ENCODE measurements at regions of chr7 and their contacts with region 1.

Region 1: GRCh38 chr7:55641273-55641691 is 69.0 kb upstream of the VOPP1 start:
- DNase-seq: peak; percentile 62 to 90
- H3K4me3 ChIP-seq: no peak overlapping the region
- H3K27ac ChIP-seq: no peak overlapping the region
- H3K4me1 ChIP-seq: peaks cover 12% of the 10 kb centered on the region
- H3K27me3 ChIP-seq: no peaks in the 10 kb centered on the region
- CTCF ChIP-seq: peak; percentile 100

Region 2: GRCh38 chr7:54773472-54774399 is 867.5 kb before region 1 on chr7:
- CTCF ChIA-PET with region 1: no interaction called
- POLR2A ChIA-PET with region 1: no interaction called
- intact Hi-C with region 1: loop called (anchors 10 kb)
- DNase-seq: peak; percentile 94
- H3K4me3 ChIP-seq: peak overlapping the region; percentile 58
- H3K27ac ChIP-seq: peak overlapping the region; percentile 67
- H3K4me1 ChIP-seq: peaks cover 20% of the 10 kb centered on the region
- H3K27me3 ChIP-seq: no peaks in the 10 kb centered on the region
- CTCF ChIP-seq: peak; percentile 100

Region 3: DNA sequence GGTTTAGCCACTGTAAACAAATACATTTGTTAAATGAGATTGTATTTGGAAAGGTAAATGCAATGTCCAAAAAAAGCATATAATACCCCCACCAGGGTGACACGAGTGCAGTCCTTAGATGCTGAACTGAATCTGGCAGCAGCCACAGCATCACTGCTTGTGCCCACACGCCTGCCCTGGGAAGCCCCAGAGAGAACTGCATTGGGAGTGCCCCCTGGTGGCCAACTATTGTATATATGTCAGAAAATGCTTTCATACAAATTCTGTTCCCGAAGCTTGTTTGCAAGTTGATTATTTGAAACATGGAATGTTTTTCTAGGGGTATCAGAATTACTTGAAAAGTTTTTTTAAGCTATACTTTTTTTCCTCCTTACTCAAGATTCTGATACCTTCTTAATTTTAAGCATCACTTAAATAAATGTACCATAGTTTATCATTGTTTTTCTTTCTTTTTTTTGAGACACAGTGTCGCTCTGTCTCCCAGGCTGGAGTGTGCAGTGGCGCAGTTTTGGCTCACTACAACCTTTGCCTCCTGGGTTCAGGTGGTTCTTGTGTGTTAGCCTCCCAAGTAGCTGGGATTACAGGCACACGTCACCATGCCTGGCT is 226.0 kb before region 1 on chr7:
- CTCF ChIA-PET with region 1: interaction called, 10 read pairs
- POLR2A ChIA-PET with region 1: no interaction called
- intact Hi-C with region 1: no loop called
- DNase-seq: peak; percentile 75 to 82
- H3K4me3 ChIP-seq: no peak overlapping the region
- H3K27ac ChIP-seq: no peak overlapping the region
- H3K4me1 ChIP-seq: no peaks in the 10 kb centered on the region
- H3K27me3 ChIP-seq: no peaks in the 10 kb centered on the region
- CTCF ChIP-seq: peak; percentile 100

Region 4: GRCh38 chr7:55723621-55723941 is 82.3 kb after region 1 on chr7:
- CTCF ChIA-PET with region 1: no interaction called
- POLR2A ChIA-PET with region 1: no interaction called
- intact Hi-C with region 1: loop called (anchors 5 kb)
- DNase-seq: no peak
- H3K4me3 ChIP-seq: no peak overlapping the region
- H3K27ac ChIP-seq: no peak overlapping the region
- H3K4me1 ChIP-seq: 0 out of 2 replicates have a peak, but pooled peaks cover 3% of the 10 kb centered on the region
- H3K27me3 ChIP-seq: no peaks in the 10 kb centered on the region
- CTCF ChIP-seq: no peak

Region 5: DNA sequence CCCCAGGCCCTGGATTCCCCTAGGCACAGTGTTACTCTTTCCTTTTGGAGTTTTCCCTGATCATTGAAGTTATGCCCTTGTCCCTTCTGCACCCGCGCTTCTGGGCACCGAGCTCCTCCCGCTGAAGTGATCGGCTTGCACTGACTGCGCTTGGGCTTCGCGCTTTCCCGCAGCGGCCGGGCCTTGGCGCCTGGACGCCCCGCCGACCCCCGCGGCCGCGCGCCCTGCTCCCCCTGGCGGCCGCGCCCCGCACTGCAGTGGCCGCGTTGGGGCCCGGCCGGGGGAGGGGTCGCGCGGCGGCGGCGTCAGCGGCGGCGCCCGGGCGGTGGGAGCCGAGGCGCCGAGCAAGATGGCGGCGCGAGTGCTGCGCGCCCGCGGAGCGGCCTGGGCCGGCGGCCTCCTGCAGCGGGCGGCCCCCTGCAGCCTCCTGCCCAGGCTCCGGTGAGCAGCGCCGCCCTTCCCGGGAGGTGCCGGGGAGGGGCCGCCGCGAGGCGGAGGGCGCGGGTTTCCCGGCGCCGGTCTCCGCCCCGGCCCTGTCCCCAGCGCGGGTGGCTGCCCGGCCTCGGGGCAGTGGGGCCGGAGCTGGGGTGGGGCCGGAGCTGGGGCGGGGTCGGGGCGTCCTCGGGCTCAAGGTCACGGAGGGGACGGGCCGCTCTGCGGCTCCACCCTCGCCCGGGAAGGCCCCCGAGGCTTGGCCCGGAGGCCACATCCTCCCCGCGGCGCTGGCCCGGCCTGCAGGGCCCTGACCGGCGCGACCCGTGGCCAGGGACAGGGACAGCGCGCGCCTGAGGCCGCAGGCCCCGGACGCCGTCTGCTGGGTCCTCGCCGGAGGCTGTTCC is 323.2 kb after region 1 on chr7 and contains the start of gene NIPSNAP2:
- CTCF ChIA-PET with region 1: interaction called, 6 read pairs
- POLR2A ChIA-PET with region 1: no interaction called
- intact Hi-C with region 1: loop called (anchors 1 kb)
- DNase-seq: peak; percentile 63 to 89
- H3K4me3 ChIP-seq: peak within 1 kb of the TSS; percentile 67
- H3K27ac ChIP-seq: peak within 1 kb of the TSS; percentile 54
- H3K4me1 ChIP-seq: peaks cover 19% of the 10 kb centered on the region
- H3K27me3 ChIP-seq: no peaks in the 10 kb centered on the region
- CTCF ChIP-seq: peak; percentile 64
- total RNA-seq, gene NIPSNAP2: 96.1 and 97.5 TPM in 2 replicates

Region 6: GRCh38 chr7:56092789-56093531 is 451.7 kb after region 1 on chr7 and contains the start of gene PHKG1:
- CTCF ChIA-PET with region 1: interaction called, 3 read pairs
- POLR2A ChIA-PET with region 1: no interaction called
- intact Hi-C with region 1: loop called (anchors 1 kb)
- DNase-seq: peak in 1 of 2 experiments; percentile 52
- H3K4me3 ChIP-seq: no peak within 1 kb of the TSS
- H3K27ac ChIP-seq: no peak within 1 kb of the TSS
- H3K4me1 ChIP-seq: no peaks in the 10 kb centered on the region
- H3K27me3 ChIP-seq: no peaks in the 10 kb centered on the region
- CTCF ChIP-seq: 0 out of 2 replicates have a peak, but pooled peaks have one; percentile 40
- total RNA-seq, gene PHKG1: 2.7 and 3.9 TPM in 2 replicates